Endothelial cell of umbilical vein (primary cell): ENCODE measurements at regions of chr3 and their contacts with region 1.

Region 1: DNA sequence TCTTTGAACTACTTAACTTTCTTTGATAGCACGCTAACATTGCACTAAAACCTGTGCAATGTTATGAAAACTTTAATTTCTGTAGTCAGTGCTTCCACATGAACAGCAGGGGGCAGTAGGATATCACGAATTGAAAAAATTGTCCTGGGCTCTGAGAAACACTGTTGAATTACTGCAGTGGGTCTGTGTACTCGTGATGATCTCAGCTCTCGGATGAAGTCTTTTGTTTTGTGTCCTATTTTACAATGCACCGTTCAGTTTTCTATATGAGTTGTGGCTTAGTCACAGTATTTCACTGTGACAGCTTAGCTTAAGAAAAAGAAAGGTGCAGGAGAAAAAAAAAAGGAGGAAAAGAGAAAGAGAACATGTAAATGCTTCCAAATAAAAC is 141.3 kb upstream of the CCDC54 start:
- DNase-seq: peak; percentile 88
- H3K4me3 ChIP-seq: peak overlapping the region; percentile 28 to 86 (median 53)
- H3K27ac ChIP-seq: no peak overlapping the region
- H3K4me1 ChIP-seq: no peaks in the 10 kb centered on the region
- H3K27me3 ChIP-seq: no peaks in the 10 kb centered on the region
- CTCF ChIP-seq: peak; percentile 63 to 74
- POLR2A ChIP-seq: no peak

Region 2: DNA sequence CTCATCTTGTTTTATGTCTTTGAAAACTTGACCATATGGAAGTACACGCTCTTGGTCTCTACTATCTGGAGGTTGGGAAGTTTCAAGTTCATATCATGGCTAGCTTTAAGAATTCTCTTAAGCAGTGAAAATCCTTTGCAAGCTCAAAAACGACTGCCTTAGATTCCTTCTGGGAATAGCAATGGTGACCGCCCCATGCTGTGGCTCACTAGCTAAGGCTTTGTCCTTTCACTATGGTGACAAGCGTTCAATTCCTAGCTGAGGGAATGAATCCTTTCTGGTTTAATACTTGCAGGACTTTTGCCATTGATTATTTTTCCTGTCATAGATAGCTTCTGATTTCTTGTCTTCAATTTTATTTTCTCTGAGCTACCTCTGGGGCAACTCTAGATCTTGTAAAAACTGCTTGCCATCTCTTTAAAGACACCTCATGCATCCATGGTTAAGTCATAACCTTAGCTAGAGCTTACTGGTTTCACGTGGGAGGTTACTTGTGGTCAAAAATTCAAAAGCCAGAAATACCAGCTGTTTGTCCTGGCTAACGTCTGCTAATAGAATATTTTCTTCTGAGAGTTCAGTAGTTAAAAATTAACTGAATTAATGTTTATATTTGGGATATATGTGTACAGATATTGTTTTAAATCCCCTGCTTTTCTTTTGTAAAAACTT is 693.7 kb before region 1 on chr3:
- CTCF ChIA-PET with region 1: no interaction called
- POLR2A ChIA-PET with region 1: no interaction called
- dilution Hi-C with region 1: no loop called
- intact Hi-C with region 1: no loop called
- DNase-seq: no peak
- H3K4me3 ChIP-seq: no peak overlapping the region
- H3K27ac ChIP-seq: no peak overlapping the region
- H3K4me1 ChIP-seq: no peaks in the 10 kb centered on the region
- H3K27me3 ChIP-seq: peaks cover 0 to 2% of the 10 kb centered on the region in 2 experiments
- CTCF ChIP-seq: no peak
- POLR2A ChIP-seq: no peak

Region 3: DNA sequence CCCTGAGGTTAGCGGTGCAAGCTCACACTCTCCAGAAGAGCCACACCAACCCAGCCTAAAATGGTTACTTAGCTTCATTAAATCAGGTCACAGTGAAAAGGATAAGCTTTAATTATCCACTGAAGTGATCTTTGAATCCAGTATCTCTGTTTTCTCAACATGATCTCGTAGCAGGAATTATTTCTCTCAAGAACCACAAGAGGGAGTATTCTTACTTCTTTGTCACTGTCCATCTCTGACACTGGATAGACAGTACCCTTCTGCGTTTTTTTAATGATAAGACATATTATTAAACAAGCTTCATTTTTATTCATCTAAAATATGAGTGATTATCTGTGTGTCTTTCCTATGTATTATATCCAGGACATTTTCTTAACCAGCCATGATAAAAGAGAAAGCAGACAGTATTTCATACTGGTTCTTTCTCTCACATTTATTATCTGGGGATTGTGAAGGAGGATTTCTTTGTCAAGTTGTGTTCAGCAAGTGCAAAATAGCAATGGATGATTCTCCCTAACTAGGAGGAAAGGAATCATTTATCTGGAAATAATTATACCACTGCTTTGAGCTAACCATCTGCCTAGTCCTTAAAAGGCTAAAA is 36.0 kb after region 1 on chr3:
- CTCF ChIA-PET with region 1: interaction called, 21 read pairs
- POLR2A ChIA-PET with region 1: no interaction called
- dilution Hi-C with region 1: no loop called
- intact Hi-C with region 1: no loop called
- DNase-seq: peak; percentile 36
- H3K4me3 ChIP-seq: no peak overlapping the region
- H3K27ac ChIP-seq: no peak overlapping the region
- H3K4me1 ChIP-seq: no peaks in the 10 kb centered on the region
- H3K27me3 ChIP-seq: peaks cover 4 to 23% of the 10 kb centered on the region in 2 experiments
- CTCF ChIP-seq: peak; percentile 30 to 33
- POLR2A ChIP-seq: no peak

Region 4: DNA sequence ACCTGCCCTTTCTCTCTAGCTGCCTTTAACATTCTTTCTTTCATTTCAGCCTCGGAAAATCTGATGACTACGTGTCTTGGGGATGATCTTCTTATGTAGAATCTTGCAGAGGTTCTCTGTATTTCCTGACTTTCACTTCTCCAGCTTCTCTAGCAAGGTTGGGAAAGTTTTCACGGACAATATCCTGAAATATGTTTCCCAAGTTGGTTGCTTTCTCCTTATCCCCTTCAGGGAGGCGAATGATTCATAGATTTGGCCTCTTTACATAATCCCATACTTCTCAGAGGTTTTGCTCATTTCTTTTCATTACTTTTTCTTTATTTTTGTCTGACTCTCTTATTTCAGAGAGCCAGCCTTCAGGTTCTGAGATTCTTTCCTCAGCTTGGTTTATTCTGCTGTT is 79.2 kb after region 1 on chr3:
- CTCF ChIA-PET with region 1: no interaction called
- POLR2A ChIA-PET with region 1: no interaction called
- dilution Hi-C with region 1: no loop called
- intact Hi-C with region 1: no loop called
- DNase-seq: no peak
- H3K4me3 ChIP-seq: no peak overlapping the region
- H3K27ac ChIP-seq: no peak overlapping the region
- H3K4me1 ChIP-seq: no peaks in the 10 kb centered on the region
- H3K27me3 ChIP-seq: no peaks in the 10 kb centered on the region
- CTCF ChIP-seq: no peak
- POLR2A ChIP-seq: no peak

Region 5: GRCh38 chr3:107522510-107523288 is 286.8 kb after region 1 on chr3 and contains the start of gene BBX:
- CTCF ChIA-PET with region 1: interaction called, 4 read pairs
- POLR2A ChIA-PET with region 1: no interaction called
- dilution Hi-C with region 1: no loop called
- intact Hi-C with region 1: loop called (anchors 1 kb)
- DNase-seq: peak; percentile 99
- H3K4me3 ChIP-seq: peak within 1 kb of the TSS; percentile 85 to 87 (median 86)
- H3K27ac ChIP-seq: peak within 1 kb of the TSS; percentile 18
- H3K4me1 ChIP-seq: peaks cover 8% of the 10 kb centered on the region
- H3K27me3 ChIP-seq: peaks cover 1 to 2% of the 10 kb centered on the region in 2 experiments
- CTCF ChIP-seq: no peak
- POLR2A ChIP-seq: peak; percentile 25
- total RNA-seq, gene BBX: 35.6 and 43.4 TPM in 2 replicates

Region 6: GRCh38 chr3:107676469-107677309 is 440.8 kb after region 1 on chr3:
- CTCF ChIA-PET with region 1: interaction called, 20 read pairs
- POLR2A ChIA-PET with region 1: no interaction called
- dilution Hi-C with region 1: no loop called
- intact Hi-C with region 1: no loop called
- DNase-seq: peak; percentile 42
- H3K4me3 ChIP-seq: no peak overlapping the region
- H3K27ac ChIP-seq: no peak overlapping the region
- H3K4me1 ChIP-seq: no peaks in the 10 kb centered on the region
- H3K27me3 ChIP-seq: no peaks in the 10 kb centered on the region
- CTCF ChIP-seq: peak; percentile 20 to 31
- POLR2A ChIP-seq: no peak

Region 7: DNA sequence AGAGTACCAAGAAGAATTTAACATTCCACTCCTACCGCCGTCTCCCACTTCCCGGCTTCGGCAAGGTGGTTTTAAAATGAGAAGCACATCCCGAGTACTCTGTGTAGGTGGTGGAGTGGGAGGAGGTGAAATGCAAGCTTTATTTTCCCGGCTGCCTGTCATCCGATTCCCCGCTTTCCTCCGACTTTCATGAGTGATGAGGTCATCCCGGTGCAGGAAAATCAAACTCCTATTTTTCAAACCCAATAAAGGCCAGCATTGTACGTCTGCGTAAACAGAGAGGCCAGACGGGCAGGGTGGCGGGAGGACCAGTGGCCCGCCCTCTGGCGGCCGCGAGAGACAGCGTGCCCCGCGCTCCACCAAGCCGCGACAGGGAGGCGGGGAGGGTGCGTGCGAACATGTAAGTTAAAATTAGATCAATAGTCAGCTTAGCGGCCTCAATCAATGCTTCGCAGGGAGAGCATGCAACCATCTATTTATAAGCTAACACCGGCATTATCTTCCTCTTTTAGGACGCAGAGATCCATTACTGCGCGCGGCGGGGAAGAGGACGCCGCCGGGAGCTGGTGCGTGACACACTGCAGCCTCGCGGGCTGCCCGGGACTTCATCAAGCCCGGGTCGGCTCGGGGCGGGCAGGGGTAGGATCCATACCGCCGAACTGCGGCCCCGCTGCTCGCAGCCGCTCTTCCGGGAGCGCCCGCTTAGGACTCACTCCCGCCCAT is 691.6 kb after region 1 on chr3:
- CTCF ChIA-PET with region 1: interaction called, 50 read pairs
- POLR2A ChIA-PET with region 1: no interaction called
- dilution Hi-C with region 1: no loop called
- intact Hi-C with region 1: loop called (anchors 1 kb)
- DNase-seq: peak; percentile 81
- H3K4me3 ChIP-seq: peak overlapping the region; percentile 67 to 73 (median 68)
- H3K27ac ChIP-seq: no peak overlapping the region
- H3K4me1 ChIP-seq: peaks cover 11% of the 10 kb centered on the region
- H3K27me3 ChIP-seq: peaks cover 0 to 2% of the 10 kb centered on the region in 2 experiments
- CTCF ChIP-seq: peak; percentile 93 to 96
- POLR2A ChIP-seq: no peak

Region 8: GRCh38 chr3:108552267-108553159 is 1316.6 kb after region 1 on chr3:
- CTCF ChIA-PET with region 1: interaction called, 12 read pairs
- POLR2A ChIA-PET with region 1: no interaction called
- dilution Hi-C with region 1: no loop called
- intact Hi-C with region 1: loop called (anchors 5 kb)
- DNase-seq: peak; percentile 68
- H3K4me3 ChIP-seq: no peak overlapping the region
- H3K27ac ChIP-seq: no peak overlapping the region
- H3K4me1 ChIP-seq: peaks cover 12% of the 10 kb centered on the region
- H3K27me3 ChIP-seq: no peaks in the 10 kb centered on the region
- CTCF ChIP-seq: peak; percentile 21 to 31
- POLR2A ChIP-seq: no peak